Activated T-helper 1 cell treated with anti-CD3 and anti-CD28 coated beads, Interleukin-12 subunit alpha, Interleukin-12 subunit beta, Interleukin-2, Interleukin-4 antibody, amounts not matched to agents 30 ng/mL and 10 ng/mL and 1 ng/mL, durations not matched to agents 14 hours and 24 hours and 36 hours (primary cell): ENCODE measurements at regions of chr14 and their contacts with region 1.

Region 1: DNA sequence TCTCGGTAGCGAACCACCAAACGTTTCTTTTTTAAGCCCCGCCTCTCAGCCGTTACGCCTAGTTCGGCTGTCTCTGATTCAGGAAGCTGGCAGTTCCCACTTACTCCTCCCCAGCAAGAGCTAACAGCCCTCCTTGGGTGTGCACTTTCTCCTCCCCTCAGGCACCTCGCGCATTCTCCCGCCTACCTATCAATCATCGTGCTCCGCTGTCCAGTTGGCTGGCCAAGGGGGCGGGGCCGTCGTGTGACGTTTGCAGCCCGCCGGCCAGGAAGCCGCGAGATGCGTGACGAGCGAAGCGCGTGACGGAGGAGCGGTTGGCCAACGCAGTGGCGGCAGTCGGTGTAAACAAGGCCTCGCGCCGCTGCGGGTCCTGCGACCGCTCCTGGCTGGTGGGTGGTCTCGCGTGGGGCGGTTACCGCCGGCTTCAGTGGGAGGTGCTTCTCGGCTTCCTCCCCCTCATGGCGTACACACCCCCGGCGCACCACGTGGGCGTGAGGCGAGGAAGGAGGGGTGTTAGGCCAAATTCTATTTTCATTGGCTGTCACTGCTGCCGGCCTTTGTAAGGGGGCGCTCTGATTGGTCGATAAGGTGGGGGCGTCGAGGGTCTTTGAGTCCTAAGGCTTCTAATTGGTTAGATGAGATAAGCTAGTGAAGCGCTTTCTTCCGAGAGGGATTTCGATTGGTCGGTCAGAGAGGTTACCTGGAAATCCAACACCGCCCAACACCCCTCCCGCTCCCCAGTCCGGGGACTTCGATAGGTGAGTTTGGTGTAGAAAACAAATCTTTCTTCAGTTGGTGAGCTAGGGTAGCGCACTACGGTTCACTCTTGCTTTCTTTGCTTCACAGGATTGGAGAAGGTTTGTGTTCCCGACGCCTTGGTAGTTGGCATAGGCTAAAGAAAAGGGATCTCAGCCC is at the starts of genes DCAF11 and NRL:
- DNase-seq: peak; percentile 98
- H3K4me3 Mint-ChIP-seq: peak within 1 kb of the TSS; percentile 99
- H3K27ac Mint-ChIP-seq: peak within 1 kb of the TSS; percentile 98
- H3K4me1 Mint-ChIP-seq: peaks cover 34% of the 10 kb centered on the region
- H3K27me3 Mint-ChIP-seq: no peaks in the 10 kb centered on the region
- total RNA-seq, gene DCAF11: 69.9 and 71.6 TPM in 2 replicates
- total RNA-seq, gene NRL: 2.1 and 2.7 TPM in 2 replicates

Region 2: GRCh38 chr14:23469127-23469905 is 645.5 kb before region 1 on chr14 and contains the start of gene NGDN:
- intact Hi-C with region 1: loop called (anchors 10 kb)
- DNase-seq: peak; percentile 89
- H3K4me3 Mint-ChIP-seq: no peak within 1 kb of the TSS
- H3K27ac Mint-ChIP-seq: peak within 1 kb of the TSS; percentile 45
- H3K4me1 Mint-ChIP-seq: peaks cover 11% of the 10 kb centered on the region
- H3K27me3 Mint-ChIP-seq: peaks cover 2% of the 10 kb centered on the region
- total RNA-seq, gene NGDN: 80.1 and 84.5 TPM in 2 replicates

Region 3: DNA sequence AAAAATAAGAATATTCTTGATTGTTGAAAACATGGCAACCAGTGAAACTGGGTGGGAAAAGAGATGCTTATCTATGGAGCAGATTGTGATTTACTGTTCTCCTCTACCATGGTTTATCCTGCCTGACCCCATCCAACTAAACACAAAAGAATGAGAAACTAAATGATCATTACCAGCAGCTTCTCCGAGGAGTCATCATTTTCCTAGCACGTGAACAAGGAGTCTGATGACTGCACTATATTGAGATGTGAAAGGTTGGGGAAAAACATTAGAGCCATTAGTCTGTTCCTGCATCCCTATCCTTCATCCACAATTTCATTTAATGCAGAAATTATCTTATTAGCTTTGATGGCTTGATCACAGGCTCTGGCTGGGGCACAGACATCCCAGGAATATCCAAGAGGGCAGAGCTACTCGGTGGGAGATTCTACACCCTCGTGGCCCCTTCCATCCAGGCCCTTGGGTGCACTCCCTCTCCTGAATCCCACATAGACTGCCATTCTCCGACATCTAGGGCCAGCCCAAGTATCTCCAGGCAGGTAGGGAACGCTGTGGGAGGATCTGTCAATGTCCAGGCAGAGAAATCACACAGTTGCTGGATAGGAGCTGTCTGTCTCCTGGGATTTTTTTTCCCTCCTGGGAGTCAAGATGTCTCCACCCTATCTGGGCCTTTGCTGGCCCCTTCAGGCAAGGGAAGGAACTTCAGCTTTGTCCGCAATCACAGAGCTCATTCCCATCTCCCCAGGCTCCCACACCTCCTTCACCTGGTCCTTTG is 204.5 kb before region 1 on chr14:
- intact Hi-C with region 1: no loop called
- DNase-seq: no peak
- H3K4me3 Mint-ChIP-seq: no peak overlapping the region
- H3K27ac Mint-ChIP-seq: no peak overlapping the region
- H3K4me1 Mint-ChIP-seq: no peaks in the 10 kb centered on the region
- H3K27me3 Mint-ChIP-seq: peaks cover 9% of the 10 kb centered on the region

Region 4: DNA sequence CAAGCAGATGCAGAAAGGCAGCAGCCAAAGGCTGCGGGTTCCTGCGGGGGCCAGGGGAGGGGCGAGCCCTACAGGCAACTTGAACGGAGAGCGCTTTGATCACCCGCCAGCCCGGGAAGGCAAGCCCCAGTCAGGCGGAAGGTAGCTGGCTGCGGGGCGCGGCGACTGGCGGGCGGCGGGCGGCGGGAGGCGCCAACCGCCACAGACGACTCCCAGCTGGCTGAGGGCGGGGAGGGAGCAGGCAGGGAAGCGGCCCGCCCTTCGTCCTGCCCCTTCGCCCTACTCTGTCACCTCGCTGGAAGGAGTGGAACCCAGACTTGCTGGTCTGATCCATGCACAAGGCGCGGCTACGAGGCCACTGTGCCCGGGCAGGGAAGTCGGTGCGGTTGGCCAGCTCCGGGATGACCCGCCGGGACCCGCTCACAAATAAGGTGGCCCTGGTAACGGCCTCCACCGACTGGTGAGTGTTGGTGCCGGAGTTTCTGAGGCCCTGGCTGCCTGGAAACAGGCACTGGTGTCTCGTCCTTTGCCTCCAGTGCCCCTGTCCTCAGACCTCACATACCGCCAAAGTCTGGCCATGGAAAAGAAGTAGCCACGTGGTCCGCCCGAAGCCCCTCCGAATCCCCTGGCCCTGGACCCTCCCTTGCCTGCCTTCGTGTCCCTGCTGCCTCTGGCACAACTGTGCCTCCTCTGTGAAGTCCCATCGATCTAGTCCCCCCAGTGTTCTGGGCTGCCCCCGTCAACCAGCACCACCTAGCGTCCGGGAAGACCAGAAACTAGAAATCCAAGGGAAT is 78.4 kb before region 1 on chr14:
- intact Hi-C with region 1: loop called (anchors 1 kb)
- DNase-seq: peak; percentile 70
- H3K4me3 Mint-ChIP-seq: peak overlapping the region; percentile 88
- H3K27ac Mint-ChIP-seq: peak overlapping the region; percentile 73
- H3K4me1 Mint-ChIP-seq: peaks cover 6% of the 10 kb centered on the region
- H3K27me3 Mint-ChIP-seq: peaks cover 7% of the 10 kb centered on the region

Region 5: GRCh38 chr14:24135834-24136542 is 21.2 kb after region 1 on chr14 and contains the start of gene PSME1:
- intact Hi-C with region 1: loop called (anchors 1 kb)
- DNase-seq: peak; percentile 92
- H3K4me3 Mint-ChIP-seq: peak within 1 kb of the TSS; percentile 92
- H3K27ac Mint-ChIP-seq: peak within 1 kb of the TSS; percentile 90
- H3K4me1 Mint-ChIP-seq: peaks cover 64% of the 10 kb centered on the region
- H3K27me3 Mint-ChIP-seq: no peaks in the 10 kb centered on the region
- total RNA-seq, gene PSME1: 291 and 295 TPM in 2 replicates

Region 6: DNA sequence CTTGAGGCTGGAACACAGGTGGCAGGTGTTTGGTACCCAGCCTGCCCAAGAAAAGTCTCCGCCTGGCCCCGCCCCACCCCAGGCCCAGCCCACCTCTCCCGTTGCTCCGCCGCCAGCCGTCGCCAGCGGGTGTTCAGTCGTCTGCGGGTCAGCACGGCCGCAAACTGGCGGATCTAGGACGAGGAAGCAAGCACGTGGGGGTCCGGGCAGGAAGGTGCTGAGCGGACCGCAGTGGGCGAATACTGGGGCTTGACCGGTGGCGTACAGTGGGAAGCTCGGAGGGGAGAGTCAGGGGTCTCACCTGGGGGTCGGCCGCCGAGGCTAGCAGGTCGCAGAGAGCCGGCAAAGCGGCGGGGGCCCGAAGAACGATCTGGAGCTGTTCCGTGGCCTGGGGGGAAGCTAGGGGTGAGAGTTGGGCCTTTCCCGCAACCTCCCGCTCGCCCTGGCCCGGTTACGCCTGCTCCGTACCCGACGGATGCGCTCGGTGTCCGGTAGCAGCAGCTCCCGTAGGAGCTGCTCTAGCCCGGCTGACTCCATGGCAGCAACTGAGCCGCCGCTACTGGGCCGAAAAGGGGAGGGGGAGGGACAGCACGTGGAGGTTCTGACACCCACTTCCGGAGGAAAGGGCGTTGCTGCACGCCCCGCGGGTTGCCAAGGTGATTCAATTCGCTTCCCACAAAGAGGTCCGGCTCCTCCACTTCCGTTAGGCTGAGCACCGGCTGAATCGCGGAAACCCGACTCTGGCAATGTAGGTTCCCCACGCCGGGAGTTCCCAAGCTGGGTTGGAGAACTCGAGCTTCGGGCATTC is 73.7 kb after region 1 on chr14 and contains the start of gene IPO4:
- intact Hi-C with region 1: loop called (anchors 1 kb)
- DNase-seq: peak; percentile 93
- H3K4me3 Mint-ChIP-seq: peak within 1 kb of the TSS; percentile 91
- H3K27ac Mint-ChIP-seq: peak within 1 kb of the TSS; percentile 86
- H3K4me1 Mint-ChIP-seq: peaks cover 42% of the 10 kb centered on the region
- H3K27me3 Mint-ChIP-seq: no peaks in the 10 kb centered on the region
- total RNA-seq, gene IPO4: 106 and 107 TPM in 2 replicates

Region 7: DNA sequence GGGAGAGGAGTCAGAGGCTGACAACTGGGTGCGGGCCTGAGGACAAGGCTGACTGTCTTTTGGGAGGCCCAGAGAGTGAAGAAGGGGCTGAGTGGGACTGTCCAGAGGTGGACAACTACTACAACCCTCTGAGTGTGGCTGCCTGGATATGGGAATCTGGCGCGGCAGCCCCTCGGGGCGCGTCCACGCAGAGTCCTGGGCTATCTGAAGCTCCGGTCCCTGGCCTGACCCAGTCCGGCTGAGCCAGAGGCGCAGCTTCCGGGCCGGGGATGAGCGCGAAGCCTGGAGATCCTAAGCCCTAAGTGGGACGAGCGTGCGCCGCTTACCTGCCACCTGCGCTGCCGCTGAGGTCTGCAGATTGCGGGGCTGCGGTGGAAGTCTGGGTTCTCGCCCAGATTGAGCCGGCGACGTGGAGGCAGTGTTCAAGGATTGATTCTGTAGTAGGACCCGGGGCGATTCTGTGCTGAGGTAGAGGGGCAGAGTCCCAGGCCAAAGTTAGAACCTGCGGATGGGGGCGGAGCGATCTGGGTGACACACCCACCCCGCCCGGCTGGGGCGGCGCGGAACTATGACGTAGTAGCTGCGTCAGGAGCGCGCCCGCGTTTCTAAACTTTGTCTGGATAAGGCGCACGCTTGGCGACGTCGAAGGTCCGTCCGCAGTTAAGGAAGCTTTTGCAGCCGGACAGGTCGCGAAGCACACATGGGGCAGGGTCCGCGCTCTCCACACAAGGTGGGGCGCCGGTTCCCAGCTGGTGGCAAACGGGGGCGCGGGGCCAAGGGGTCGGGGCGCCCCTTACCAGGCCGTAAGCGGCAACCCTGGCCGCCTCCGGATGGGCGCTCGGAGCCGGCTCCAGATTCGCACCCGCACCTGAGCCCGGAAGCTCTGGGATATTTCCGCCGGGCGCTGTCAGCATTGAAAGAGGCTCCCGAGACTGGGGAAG is 184.7 kb after region 1 on chr14 and contains the starts of genes DHRS1 and NOP9:
- intact Hi-C with region 1: loop called (anchors 1 kb)
- DNase-seq: peak; percentile 90
- H3K4me3 Mint-ChIP-seq: peak within 1 kb of the TSS; percentile 94
- H3K27ac Mint-ChIP-seq: peak within 1 kb of the TSS; percentile 96
- H3K4me1 Mint-ChIP-seq: peaks cover 44% of the 10 kb centered on the region
- H3K27me3 Mint-ChIP-seq: no peaks in the 10 kb centered on the region
- total RNA-seq, gene DHRS1: 7.5 TPM in 2 replicates
- total RNA-seq, gene NOP9: 49.3 and 52.6 TPM in 2 replicates